ENCODE measurements at regions of chr15 and their contacts with region 1.

Region 1: GRCh38 chr15:90931737-90932659 is at the start of gene HDDC3:
- DNase-seq: peak; percentile 95
- ATAC-seq: peak; percentile 65 to 72 (median 70)
- H3K4me3 ChIP-seq: peak within 1 kb of the TSS; percentile 95
- H3K27ac ChIP-seq: peak within 1 kb of the TSS; percentile 95
- H3K4me1 ChIP-seq: peaks cover 40% of the 10 kb centered on the region
- H3K27me3 ChIP-seq: no peaks in the 10 kb centered on the region
- CTCF ChIP-seq: peak; percentile 94
- total RNA-seq, gene HDDC3: 9.9 to 25.5 (median 12.9) TPM

Region 2: GRCh38 chr15:90902040-90902839 is 29.8 kb before region 1 on chr15:
- intact Hi-C with region 1: loop called (anchors 1 to 2 kb)
- DNase-seq: peak; percentile 79 to 88
- ATAC-seq: peak; percentile 84 to 91 (median 88)
- H3K4me3 ChIP-seq: peak overlapping the region; percentile 69
- H3K27ac ChIP-seq: peak overlapping the region; percentile 95
- H3K4me1 ChIP-seq: peaks cover 20% of the 10 kb centered on the region
- H3K27me3 ChIP-seq: no peaks in the 10 kb centered on the region
- CTCF ChIP-seq: peak; percentile 68

Region 3: DNA sequence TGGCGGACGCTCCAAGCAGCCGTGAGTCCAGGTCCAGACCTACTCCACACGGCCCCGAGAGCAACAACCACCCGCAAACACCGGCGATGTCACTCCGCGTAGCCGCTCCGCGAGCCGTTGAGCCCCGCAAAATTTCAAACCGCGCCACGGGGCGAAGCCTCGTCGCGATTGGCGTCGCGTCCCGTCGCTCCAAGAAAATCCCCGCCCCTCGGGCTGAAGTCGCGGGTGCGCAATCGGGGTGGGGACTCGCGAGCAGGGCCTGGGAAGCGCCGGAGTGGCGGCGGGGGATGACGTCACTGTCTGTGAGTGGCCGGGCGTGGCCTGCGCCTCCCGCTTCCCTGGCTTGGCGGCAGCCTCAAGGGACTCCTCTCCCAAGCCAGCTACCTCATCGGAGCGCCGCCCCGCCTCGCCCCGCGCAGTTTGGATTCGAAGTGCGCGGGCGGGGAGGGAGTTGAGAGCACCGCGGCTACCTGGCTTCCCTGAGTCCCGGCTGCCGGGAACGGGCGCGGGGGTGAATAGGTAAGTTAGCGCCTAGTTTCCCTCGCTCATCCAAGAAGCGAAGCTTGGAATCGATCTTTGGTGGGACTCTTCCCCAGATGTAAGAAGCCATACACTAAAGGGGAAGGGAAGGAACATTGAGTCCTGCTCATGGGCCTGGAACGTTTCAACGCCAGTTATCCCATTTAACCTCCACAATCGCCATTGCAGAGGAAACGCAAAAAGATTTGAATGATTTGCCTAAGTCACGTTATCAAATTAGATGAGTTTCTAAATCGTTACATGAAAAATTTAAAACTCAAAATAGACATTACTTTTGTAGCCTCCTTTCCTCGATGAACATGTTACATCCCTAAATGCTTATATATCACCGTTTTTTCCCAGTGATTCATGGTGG is 62.7 kb after region 1 on chr15 and contains the start of gene PRC1:
- intact Hi-C with region 1: no loop called
- DNase-seq: peak; percentile 98 to 99
- ATAC-seq: peak; percentile 100
- H3K4me3 ChIP-seq: peak within 1 kb of the TSS; percentile 90
- H3K27ac ChIP-seq: peak within 1 kb of the TSS; percentile 60
- H3K4me1 ChIP-seq: peaks cover 3% of the 10 kb centered on the region
- H3K27me3 ChIP-seq: no peaks in the 10 kb centered on the region
- CTCF ChIP-seq: no peak
- total RNA-seq, gene PRC1: 1.6 to 2.2 (median 1.9) TPM

Region 4: DNA sequence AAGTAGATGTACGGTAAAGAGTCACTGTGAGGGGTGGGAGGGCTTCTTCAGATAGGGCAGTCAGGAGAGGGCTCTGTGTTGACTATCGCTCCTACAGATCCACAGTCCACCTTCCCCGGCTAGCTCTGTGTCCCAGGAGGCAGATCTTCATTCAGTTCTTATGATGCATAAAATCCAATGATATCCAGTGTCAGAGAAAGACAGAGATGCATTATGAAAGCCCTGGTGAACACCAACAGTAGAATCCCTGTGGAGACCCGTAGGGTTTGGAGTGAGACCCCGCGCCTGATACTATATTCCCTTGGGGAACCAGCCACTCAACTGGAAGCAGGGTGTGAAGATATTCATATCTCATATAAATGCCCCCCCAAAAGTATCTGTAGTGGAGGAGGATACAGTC is 801.7 kb after region 1 on chr15:
- intact Hi-C with region 1: no loop called
- DNase-seq: no peak
- ATAC-seq: no peak
- H3K4me3 ChIP-seq: no peak overlapping the region
- H3K27ac ChIP-seq: no peak overlapping the region
- H3K4me1 ChIP-seq: no peaks in the 10 kb centered on the region
- H3K27me3 ChIP-seq: peaks cover 3 to 5% (median 5%) of the 10 kb centered on the region in 3 donors
- CTCF ChIP-seq: no peak